Spleen (tissue), 13 donors: ENCODE measurements at regions of chr5 and their contacts with region 1.

Region 1: DNA sequence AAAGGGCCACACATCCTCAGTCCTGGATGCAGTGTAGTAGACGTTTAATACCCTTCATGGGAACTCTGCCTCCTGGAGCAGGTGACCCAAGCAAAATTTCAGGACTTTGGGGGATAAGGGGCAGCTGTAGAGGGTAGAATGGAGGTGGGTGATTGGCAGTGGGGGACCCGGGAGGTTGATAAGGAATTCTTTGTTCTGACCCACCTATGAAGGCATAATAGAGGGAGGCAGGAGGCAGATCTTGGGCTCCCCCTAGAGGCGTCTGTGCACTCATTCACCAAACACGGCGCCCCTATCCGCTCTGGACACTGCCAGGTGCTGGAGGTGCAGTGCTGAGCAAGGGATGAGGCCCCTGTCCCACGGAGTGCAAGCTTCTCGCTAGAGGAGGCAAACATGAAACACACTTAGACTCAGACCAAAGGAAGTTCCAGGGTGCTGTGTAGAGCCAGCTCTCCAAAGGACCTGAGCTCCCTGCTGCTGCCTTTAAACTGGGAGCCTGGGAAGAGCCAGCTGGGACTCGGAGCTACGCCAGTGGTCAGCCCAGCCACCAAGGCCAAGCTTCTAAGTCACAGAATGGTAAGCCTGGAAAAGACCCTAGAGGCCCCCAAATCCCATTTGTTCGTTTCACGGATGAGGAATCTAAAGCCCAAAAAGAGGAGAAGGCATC is 7.7 kb downstream of the IL17B start:
- DNase-seq: peak; percentile 88
- H3K4me3 ChIP-seq: no peak overlapping the region
- H3K27ac ChIP-seq: no peak overlapping the region
- H3K4me1 ChIP-seq: peaks cover 0 to 20% (median 4%) of the 10 kb centered on the region in 6 donors
- H3K27me3 ChIP-seq: no peaks in the 10 kb centered on the region
- CTCF ChIP-seq: peak; percentile 23 to 87 (median 75)
- POLR2A ChIP-seq: no peak

Region 2: GRCh38 chr5:149317281-149318048 is 54.0 kb before region 1 on chr5:
- intact Hi-C with region 1: loop called (anchors 5 kb)
- DNase-seq: no peak
- H3K4me3 ChIP-seq: no peak overlapping the region
- H3K27ac ChIP-seq: no peak overlapping the region
- H3K4me1 ChIP-seq: peaks cover 0 to 8% (median 0%) of the 10 kb centered on the region in 6 donors
- H3K27me3 ChIP-seq: no peaks in the 10 kb centered on the region
- CTCF ChIP-seq: peak; percentile 42 to 77 (median 69)
- POLR2A ChIP-seq: no peak